Activated B cell treated with CpG ODN at 0.5 μM for 24 hours (primary cell): ENCODE measurements at regions of chr6 and their contacts with region 1.

Region 1: GRCh38 chr6:30238174-30238795 is 25.1 kb upstream of the TRIM26 start:
- DNase-seq: no peak
- ATAC-seq: peak; percentile 61
- H3K4me3 Mint-ChIP-seq: no peak overlapping the region
- H3K27ac Mint-ChIP-seq: no peak overlapping the region
- H3K4me1 Mint-ChIP-seq: no peaks in the 10 kb centered on the region
- H3K27me3 Mint-ChIP-seq: peaks cover 25% of the 10 kb centered on the region
- CTCF ChIP-seq: no peak

Region 2: GRCh38 chr6:30200551-30201281 is 37.6 kb before region 1 on chr6:
- CTCF ChIA-PET with region 1: no interaction called
- POLR2A ChIA-PET with region 1: no interaction called
- intact Hi-C with region 1: no loop called
- DNase-seq: no peak
- ATAC-seq: peak; percentile 93
- H3K4me3 Mint-ChIP-seq: peak overlapping the region; percentile 48
- H3K27ac Mint-ChIP-seq: peak overlapping the region; percentile 83
- H3K4me1 Mint-ChIP-seq: peaks cover 44% of the 10 kb centered on the region
- H3K27me3 Mint-ChIP-seq: no peaks in the 10 kb centered on the region
- CTCF ChIP-seq: no peak

Region 3: DNA sequence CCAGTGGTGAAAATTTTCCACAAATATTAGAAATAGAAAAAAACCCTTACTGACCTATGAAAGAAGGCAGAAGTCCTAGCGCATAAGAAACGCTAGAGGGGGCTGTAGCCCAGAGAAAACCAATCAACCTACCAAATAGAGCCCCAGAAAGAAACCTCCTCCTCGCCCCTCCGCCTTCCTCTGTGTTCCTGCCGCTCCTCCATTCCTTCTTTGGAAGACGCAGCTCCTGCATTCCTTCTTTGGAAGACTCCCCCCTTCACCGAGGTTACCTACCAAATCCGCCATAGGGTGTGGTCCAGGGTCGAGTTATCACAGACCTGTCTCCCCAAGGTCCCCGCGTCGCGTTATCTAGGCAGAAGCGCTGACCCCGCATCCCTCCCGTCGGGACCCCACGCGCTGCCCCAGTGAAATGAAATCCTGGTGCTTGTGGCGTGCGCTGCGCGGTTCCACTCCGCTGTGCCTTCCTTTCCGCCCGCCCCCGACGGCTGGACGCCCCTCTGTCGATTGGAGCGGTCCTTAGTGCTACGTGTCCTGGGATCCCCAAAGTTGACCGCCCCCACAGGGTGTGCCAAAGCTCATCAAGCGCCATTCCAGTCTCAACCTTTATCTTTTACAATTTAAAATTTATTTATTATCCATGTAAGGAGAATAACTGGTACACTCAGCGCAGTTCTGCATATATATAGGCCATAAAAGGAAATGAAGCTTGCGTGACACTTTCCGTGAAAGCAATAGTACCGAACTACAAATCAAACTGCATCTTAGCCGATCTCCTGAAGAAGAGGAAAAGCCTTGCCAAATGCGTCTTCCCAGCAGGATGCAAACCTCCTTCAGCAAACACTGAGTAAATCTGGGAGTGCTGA is 119.6 kb after region 1 on chr6:
- CTCF ChIA-PET with region 1: no interaction called
- POLR2A ChIA-PET with region 1: no interaction called
- intact Hi-C with region 1: loop called (anchors 5 kb)
- DNase-seq: peak; percentile 33
- ATAC-seq: peak; percentile 84
- H3K4me3 Mint-ChIP-seq: peak overlapping the region; percentile 84
- H3K27ac Mint-ChIP-seq: no peak overlapping the region
- H3K4me1 Mint-ChIP-seq: peaks cover 7% of the 10 kb centered on the region
- H3K27me3 Mint-ChIP-seq: peaks cover 44% of the 10 kb centered on the region
- CTCF ChIP-seq: peak; percentile 50

Region 4: GRCh38 chr6:30965140-30965601 is 726.9 kb after region 1 on chr6:
- CTCF ChIA-PET with region 1: no interaction called
- POLR2A ChIA-PET with region 1: no interaction called
- intact Hi-C with region 1: no loop called
- DNase-seq: no peak
- ATAC-seq: no peak
- H3K4me3 Mint-ChIP-seq: no peak overlapping the region
- H3K27ac Mint-ChIP-seq: no peak overlapping the region
- H3K4me1 Mint-ChIP-seq: no peaks in the 10 kb centered on the region
- H3K27me3 Mint-ChIP-seq: peaks cover 23% of the 10 kb centered on the region
- CTCF ChIP-seq: no peak